ENCODE measurements at regions of chr13 and their contacts with region 1.

Region 1: DNA sequence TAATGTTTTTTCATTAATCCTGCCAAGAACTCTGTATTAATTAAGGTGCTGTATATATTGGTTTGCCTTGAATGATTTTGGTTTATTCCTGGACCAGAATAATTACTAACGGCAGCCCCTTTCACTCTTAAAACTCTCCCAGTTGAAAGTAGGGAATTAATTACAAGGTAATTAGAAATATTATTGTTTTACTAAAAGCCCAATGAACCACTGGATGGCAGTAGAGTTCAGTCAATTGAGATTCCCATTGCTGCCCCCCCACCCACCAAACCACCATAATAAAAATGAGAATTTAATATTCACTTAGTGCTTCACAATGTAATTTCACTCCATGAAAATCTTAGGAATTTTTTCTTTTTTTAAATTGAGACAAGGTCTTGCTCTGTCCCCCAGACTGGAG is 13.7 kb downstream of the WBP4 start:
- DNase-seq: peak; percentile 20 to 48 (median 29)
- ATAC-seq: peak; percentile 34; the same call in 1 of the 3 replicates
- H3K4me3 ChIP-seq: no peak overlapping the region
- H3K27ac ChIP-seq: no peak overlapping the region
- H3K4me1 ChIP-seq: no peaks in the 10 kb centered on the region; a peak in 1 of 5 replicates
- H3K27me3 ChIP-seq: no peaks in the 10 kb centered on the region
- CTCF ChIP-seq: peak; percentile 30 to 66 (median 52); a peak in 3 of 6 replicates
- EP300 ChIP-seq: no peak
- POLR2A ChIP-seq: no peak
- RAD21 ChIP-seq: peak; percentile 57 to 62

Region 2: DNA sequence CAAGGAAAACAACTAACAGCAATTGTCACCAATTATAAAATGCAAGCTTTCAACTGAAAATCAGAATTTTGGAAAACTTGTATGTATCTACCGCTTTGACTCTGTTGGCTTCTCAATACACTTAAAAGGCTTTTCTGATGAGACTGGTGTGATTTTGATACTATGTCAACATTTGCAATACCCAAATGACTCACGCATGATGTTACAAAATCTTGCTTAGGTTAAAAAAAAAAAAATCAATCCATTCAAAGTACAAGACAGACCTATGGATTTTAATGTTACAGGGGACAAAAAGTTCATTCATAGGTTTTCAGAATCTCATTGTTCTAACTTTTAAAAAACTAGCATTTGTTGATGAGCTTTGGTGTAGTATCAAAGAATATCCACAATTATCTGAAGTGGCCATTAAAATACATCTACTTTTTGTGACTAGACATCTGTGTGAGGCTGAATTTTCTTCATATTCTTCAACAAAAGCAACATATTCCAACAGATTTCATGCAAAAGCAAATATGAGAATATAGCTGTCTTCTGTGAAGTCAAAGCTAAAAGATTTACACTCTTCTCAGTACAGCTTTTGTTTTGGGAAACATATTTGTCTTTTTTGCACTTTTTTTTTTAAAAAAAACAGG is 66.6 kb before region 1 on chr13:
- CTCF ChIA-PET with region 1: no interaction called
- POLR2A ChIA-PET with region 1: no interaction called
- in situ Hi-C with region 1: no loop called
- intact Hi-C with region 1: no loop called
- DNase-seq: no peak
- ATAC-seq: peak; percentile 2; the same call in 1 of the 3 replicates
- H3K4me3 ChIP-seq: no peak overlapping the region
- H3K27ac ChIP-seq: peak overlapping the region; percentile 71; the same call in 2 of the 3 replicates
- H3K4me1 ChIP-seq: peaks cover 8 to 41% of the 10 kb centered on the region in 2 experiments
- H3K27me3 ChIP-seq: no peaks in the 10 kb centered on the region
- CTCF ChIP-seq: no peak
- EP300 ChIP-seq: no peak; the same call in 1 of the 2 replicates
- POLR2A ChIP-seq: no peak
- RAD21 ChIP-seq: no peak

Region 3: GRCh38 chr13:41132512-41133152 is 57.6 kb after region 1 on chr13 and contains the start of gene KBTBD6:
- CTCF ChIA-PET with region 1: no interaction called
- POLR2A ChIA-PET with region 1: no interaction called
- in situ Hi-C with region 1: no loop called
- intact Hi-C with region 1: loop called (anchors 5 kb)
- DNase-seq: peak; percentile 76 to 97 (median 80)
- ATAC-seq: peak; percentile 88
- H3K4me3 ChIP-seq: peak within 1 kb of the TSS; percentile 54
- H3K27ac ChIP-seq: peak within 1 kb of the TSS; percentile 84
- H3K4me1 ChIP-seq: peaks cover 11 to 12% of the 10 kb centered on the region in 2 experiments; a peak in 4 of 5 replicates
- H3K27me3 ChIP-seq: no peaks in the 10 kb centered on the region
- CTCF ChIP-seq: no peak; a peak in 1 of 6 replicates
- EP300 ChIP-seq: 0 out of 2 replicates have a peak, but pooled peaks have one; percentile 15
- POLR2A ChIP-seq: peak; percentile 71
- RAD21 ChIP-seq: no peak
- polyA plus RNA-seq, gene KBTBD6: 2.1 to 2.8 TPM

Region 4: DNA sequence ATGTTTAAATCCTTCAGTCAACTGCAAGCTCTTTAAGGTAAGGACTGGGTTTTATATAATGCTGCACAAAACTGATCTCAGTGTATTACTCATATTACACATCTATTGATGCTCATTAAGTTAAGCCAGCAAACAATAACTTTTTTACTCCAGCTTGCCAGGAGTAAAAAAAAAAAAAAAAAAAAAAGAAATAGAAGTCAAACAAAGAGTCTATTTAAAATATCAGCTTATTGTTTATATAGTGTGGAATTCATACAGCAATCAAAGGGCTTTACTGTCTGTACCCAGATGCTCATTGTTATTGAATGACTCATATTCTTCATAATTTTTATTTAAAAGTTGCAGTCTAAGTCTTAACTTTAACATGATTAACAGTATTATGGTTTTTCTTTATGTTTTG is 141.1 kb after region 1 on chr13:
- CTCF ChIA-PET with region 1: no interaction called
- POLR2A ChIA-PET with region 1: no interaction called
- in situ Hi-C with region 1: loop called (anchors 5 kb)
- intact Hi-C with region 1: no loop called
- DNase-seq: no peak
- ATAC-seq: no peak
- H3K4me3 ChIP-seq: no peak overlapping the region
- H3K27ac ChIP-seq: no peak overlapping the region
- H3K4me1 ChIP-seq: 0 out of 5 replicates have a peak, but pooled peaks cover 0 to 2% of the 10 kb centered on the region in 2 experiments
- H3K27me3 ChIP-seq: no peaks in the 10 kb centered on the region
- CTCF ChIP-seq: no peak
- EP300 ChIP-seq: no peak
- POLR2A ChIP-seq: no peak
- RAD21 ChIP-seq: no peak

Region 5: GRCh38 chr13:41222259-41222852 is 147.3 kb after region 1 on chr13:
- CTCF ChIA-PET with region 1: interaction called, 4 read pairs
- POLR2A ChIA-PET with region 1: no interaction called
- in situ Hi-C with region 1: loop called (anchors 5 kb)
- intact Hi-C with region 1: loop called (anchors 1 kb)
- DNase-seq: peak; percentile 55 to 59 (median 58)
- ATAC-seq: peak; percentile 93
- H3K4me3 ChIP-seq: no peak overlapping the region
- H3K27ac ChIP-seq: no peak overlapping the region
- H3K4me1 ChIP-seq: 0 out of 5 replicates have a peak, but pooled peaks cover 0 to 2% of the 10 kb centered on the region in 2 experiments
- H3K27me3 ChIP-seq: no peaks in the 10 kb centered on the region
- CTCF ChIP-seq: peak; percentile 55 to 71 (median 63)
- EP300 ChIP-seq: no peak
- POLR2A ChIP-seq: no peak
- RAD21 ChIP-seq: peak; percentile 62 to 77

Measured in K562 (cell line).